ENCODE measurements at regions of chr14 and their contacts with region 1.

Region 1: DNA sequence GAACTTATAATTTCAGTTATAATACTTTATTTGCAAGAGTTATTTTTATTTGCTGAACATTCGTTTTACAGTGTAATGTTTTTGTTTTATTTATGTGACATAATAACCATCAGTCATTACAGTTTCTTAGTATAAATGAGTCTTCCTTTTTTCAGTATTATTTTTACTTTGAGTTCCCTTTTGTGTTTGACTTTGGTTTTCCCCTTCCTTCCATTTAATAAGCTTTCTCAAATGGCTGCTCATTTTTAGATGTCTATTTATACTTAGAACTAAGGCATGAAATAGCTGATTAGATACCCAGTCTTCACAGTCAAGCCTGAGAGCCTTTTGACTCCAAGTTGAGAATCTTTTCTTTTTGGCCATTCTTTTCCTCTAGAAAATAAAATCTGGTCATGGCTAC is 404.5 kb downstream of the LRFN5 start:
- DNase-seq: no peak
- ATAC-seq: no peak
- H3K4me3 ChIP-seq: no peak overlapping the region
- H3K27ac ChIP-seq: no peak overlapping the region
- H3K4me1 ChIP-seq: peaks cover 15% of the 10 kb centered on the region
- H3K27me3 ChIP-seq: no peaks in the 10 kb centered on the region
- CTCF ChIP-seq: no peak

Region 2: GRCh38 chr14:41830679-41831078 is 180.5 kb before region 1 on chr14:
- CTCF ChIA-PET with region 1: no interaction called
- POLR2A ChIA-PET with region 1: no interaction called
- intact Hi-C with region 1: loop called (anchors 5 kb)
- DNase-seq: no peak
- ATAC-seq: peak; percentile 45
- H3K4me3 ChIP-seq: no peak overlapping the region
- H3K27ac ChIP-seq: no peak overlapping the region
- H3K4me1 ChIP-seq: peaks cover 17% of the 10 kb centered on the region; the same call in 1 of the 2 replicates
- H3K27me3 ChIP-seq: no peaks in the 10 kb centered on the region
- CTCF ChIP-seq: no peak

Region 3: GRCh38 chr14:42023447-42023846 is 12.2 kb after region 1 on chr14:
- CTCF ChIA-PET with region 1: no interaction called
- POLR2A ChIA-PET with region 1: no interaction called
- intact Hi-C with region 1: loop called (anchors 1 kb)
- DNase-seq: peak; percentile 65
- ATAC-seq: peak; percentile 94
- H3K4me3 ChIP-seq: no peak overlapping the region
- H3K27ac ChIP-seq: no peak overlapping the region
- H3K4me1 ChIP-seq: no peaks in the 10 kb centered on the region
- H3K27me3 ChIP-seq: no peaks in the 10 kb centered on the region
- CTCF ChIP-seq: no peak

Region 4: DNA sequence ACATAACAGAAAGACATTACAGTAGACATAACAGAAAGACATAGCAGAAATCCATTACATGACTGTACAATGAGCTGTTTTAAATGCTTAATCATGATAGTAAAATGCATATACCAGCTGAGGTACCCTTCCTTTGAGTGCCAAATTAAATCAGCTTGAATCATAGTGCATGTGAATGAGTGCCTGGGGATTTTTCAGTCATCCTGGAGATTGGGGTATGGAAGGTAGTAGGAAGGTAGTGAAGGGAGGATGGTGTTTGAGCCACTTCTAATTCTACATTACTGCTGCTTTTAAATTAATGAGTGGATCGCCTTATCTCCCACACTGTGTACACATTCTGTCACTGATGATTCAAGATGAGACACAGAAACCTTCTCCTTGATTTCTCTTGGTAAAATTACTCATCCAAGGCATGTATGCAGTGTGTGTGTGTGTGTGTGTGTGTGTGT is 129.6 kb after region 1 on chr14:
- CTCF ChIA-PET with region 1: no interaction called
- POLR2A ChIA-PET with region 1: no interaction called
- intact Hi-C with region 1: no loop called
- DNase-seq: peak; percentile 90
- ATAC-seq: peak; percentile 93
- H3K4me3 ChIP-seq: peak overlapping the region; percentile 1; the same call in 1 of the 2 replicates
- H3K27ac ChIP-seq: peak overlapping the region; percentile 89
- H3K4me1 ChIP-seq: peaks cover 28% of the 10 kb centered on the region
- H3K27me3 ChIP-seq: no peaks in the 10 kb centered on the region
- CTCF ChIP-seq: no peak